ENCODE measurements at regions of chr9 and their contacts with region 1.

Region 1: GRCh38 chr9:75873712-75874111 is 16.8 kb upstream of the PCSK5 start:
- DNase-seq: no peak
- ATAC-seq: peak in 1 of 4 donors; percentile 48
- H3K4me3 ChIP-seq: no peak overlapping the region
- H3K27ac ChIP-seq: no peak overlapping the region
- H3K4me1 ChIP-seq: peaks cover 0 to 10% (median 0%) of the 10 kb centered on the region in 12 donors
- H3K27me3 ChIP-seq: no peaks in the 10 kb centered on the region
- CTCF ChIP-seq: no peak
- POLR2A ChIP-seq: no peak

Region 2: DNA sequence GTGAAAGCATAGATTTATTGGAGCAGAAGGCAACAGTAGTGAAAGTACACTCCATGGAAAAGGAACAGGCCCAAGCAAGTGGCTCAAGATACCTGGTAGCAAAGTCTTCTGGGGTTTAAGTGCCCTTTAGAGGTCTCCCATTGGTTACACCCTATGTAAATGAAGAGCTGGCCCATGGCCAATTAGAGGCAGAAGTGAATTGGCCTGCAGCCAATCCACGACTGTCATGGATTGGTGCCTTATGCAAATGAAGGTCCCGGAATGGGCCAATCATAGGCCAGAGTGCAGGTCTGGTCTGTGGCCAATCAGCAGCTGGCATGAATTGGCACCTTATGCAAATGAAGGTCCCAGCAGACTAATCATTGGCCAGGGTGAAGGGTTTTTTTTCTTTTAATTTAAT is 47.4 kb before region 1 on chr9:
- intact Hi-C with region 1: no loop called
- DNase-seq: peak in 1 of 5 donors; percentile 23
- ATAC-seq: no peak
- H3K4me3 ChIP-seq: no peak overlapping the region
- H3K27ac ChIP-seq: no peak overlapping the region
- H3K4me1 ChIP-seq: peaks cover 0 to 14% (median 9%) of the 10 kb centered on the region in 12 donors
- H3K27me3 ChIP-seq: no peaks in the 10 kb centered on the region
- CTCF ChIP-seq: no peak
- POLR2A ChIP-seq: no peak

Region 3: GRCh38 chr9:75930730-75931321 is 57.1 kb after region 1 on chr9:
- intact Hi-C with region 1: loop called in 2 of 10 experiments (anchors 10 kb)
- DNase-seq: no peak
- ATAC-seq: peak in 1 of 4 donors; percentile 26
- H3K4me3 ChIP-seq: no peak overlapping the region
- H3K27ac ChIP-seq: peak overlapping the region in 1 of 12 donors; percentile 51
- H3K4me1 ChIP-seq: peaks cover 0 to 16% (median 0%) of the 10 kb centered on the region in 12 donors
- H3K27me3 ChIP-seq: no peaks in the 10 kb centered on the region
- CTCF ChIP-seq: no peak
- POLR2A ChIP-seq: no peak

Region 4: DNA sequence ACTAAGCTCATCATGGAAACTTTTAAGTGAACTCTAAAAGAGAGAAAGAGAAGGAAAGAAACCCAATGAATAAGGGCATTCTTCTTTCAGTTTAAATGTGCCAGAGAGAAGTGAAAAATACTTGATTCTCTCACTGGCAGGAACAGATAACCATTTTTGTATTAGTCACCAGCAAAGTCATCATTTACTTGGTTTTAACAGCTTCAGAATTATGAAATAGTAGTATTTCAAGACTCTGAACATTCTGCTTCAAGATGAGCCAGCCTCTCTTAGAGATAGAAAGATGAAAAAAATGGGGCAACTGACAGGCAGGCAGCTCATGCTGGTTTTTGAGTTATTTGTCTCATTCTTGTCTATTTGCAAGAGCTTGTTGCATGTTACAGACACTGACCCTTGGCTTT is 688.8 kb after region 1 on chr9:
- intact Hi-C with region 1: no loop called
- DNase-seq: no peak
- ATAC-seq: peak in 2 of 4 donors; percentile 58 to 59
- H3K4me3 ChIP-seq: no peak overlapping the region
- H3K27ac ChIP-seq: peak overlapping the region in 2 of 12 donors; percentile 31 to 88
- H3K4me1 ChIP-seq: peaks cover 0 to 58% (median 0%) of the 10 kb centered on the region in 12 donors
- H3K27me3 ChIP-seq: no peaks in the 10 kb centered on the region
- CTCF ChIP-seq: no peak
- POLR2A ChIP-seq: no peak

Measured in heart left ventricle (tissue), 16 donors.